ENCODE measurements at regions of chr22 and their contacts with region 1.

Region 1: DNA sequence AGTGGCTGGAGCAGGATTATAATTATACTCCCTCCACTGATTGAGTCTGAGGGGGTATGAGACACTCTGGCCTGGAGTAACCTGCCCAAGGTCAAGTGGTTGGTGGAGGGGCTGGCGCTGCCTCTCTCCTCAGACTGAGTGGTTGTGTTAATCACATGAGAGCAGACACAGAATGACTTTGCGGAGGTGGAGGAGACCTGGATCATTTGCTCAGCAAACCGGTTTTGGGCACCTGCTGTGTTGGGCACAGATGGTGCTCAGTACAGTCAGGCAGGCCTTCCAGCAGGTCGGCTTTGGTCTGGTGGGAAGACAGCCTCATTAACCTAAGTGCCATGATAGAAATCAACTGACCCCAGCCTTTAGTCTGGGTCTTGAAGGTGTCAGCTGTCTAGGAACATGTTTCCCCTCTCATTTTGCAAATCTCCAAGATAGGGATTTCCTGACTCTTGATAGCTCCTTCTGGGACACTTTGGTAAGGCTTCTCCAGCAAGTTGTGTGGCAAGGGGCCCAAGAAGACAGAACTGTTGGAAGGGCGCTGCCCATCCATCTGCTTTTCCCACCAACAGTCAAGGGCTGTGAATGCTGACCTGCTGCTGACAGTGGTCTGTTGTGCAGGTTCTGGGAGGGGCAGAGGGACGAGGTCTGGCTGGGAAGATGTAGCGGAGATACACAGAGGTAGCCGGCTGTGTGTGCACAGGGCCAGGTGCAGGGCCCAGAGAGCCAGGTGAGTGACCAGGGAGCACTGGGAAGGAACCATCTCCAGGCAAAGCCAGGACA is 12.1 kb downstream of the BCR start:
- DNase-seq: no peak

Region 2: DNA sequence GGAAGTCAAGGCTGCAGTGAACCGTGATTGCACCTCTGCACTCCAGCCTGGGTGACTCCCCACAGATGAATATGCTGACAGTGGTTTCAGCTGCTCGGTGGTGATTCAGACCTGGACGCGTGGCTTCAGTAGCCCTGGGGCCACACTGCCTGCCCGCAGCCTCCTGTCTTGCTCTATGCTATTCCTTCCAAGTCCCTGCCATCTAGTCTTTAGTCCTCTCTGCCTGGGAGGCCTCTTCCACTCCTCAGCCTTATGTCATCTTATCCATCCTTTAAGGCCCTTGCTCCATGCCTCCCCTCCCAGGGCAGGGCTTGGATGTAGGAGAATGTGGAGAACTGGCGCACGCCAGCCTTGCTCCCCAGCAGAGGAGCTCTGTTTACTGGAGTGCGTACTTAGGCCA is 1585.6 kb before region 1 on chr22:
- intact Hi-C with region 1: no loop called
- DNase-seq: no peak

Region 3: DNA sequence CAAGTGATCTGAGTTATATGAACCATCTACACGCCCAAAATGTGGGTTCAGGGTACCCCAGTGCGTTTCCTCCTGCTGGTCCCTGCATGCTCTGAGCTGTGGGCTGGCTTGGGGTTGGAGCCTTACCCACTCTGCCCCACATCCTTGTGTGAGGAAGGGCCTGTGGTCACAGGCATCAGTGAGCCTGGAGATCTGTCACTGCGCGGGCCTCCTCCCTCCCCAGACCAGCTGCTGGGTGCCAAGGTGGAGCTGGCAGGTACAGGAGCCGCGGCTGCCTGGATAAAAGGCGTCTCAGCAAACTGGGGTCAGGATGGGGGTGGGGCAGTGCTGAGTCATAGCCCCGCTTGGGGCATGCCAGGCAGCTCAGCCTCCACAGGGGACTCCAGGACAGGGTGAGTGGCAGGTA is 104.2 kb before region 1 on chr22:
- intact Hi-C with region 1: no loop called
- DNase-seq: no peak

Region 4: DNA sequence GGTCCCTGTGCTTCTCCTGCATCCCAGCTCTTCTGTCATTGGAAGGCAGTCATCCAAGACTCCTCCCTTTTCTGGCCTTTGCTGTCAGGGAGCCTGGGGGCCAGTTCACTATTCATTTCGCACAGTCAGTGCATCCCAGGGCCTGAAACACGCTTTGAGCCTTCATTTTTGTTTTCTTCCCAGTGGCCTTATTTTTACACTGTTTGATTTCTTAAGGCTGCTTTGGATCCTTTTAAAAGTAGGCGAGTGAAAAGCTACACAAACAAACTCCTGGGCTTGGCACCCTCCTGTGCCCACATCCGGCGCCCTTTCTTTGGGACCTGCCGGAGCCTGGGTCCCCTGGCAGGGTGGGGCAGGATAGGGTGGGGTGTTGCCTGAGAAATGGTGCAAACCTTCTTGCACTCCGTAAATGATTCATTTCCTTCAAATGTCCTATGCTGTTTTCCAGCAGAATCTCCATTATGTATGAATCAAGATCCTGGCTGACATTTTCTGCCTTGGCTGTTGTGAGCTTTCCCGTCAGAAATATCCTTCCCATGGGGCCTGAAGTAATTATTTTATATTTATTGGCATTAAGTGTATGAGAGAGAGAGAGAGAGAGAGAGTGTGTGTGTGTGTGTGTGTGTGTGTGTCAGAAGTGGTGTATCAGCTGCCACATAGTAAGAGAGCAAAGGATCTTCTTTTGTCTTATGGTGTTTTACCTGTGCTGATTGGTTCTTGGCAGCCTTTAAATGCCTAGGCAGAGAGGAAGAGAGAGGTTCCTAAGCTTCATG is 33.5 kb after region 1 on chr22:
- intact Hi-C with region 1: loop called in 1 of 2 experiments (anchors 5 kb)
- DNase-seq: peak; percentile 93

Region 5: GRCh38 chr22:23722724-23723123 is 530.4 kb after region 1 on chr22:
- intact Hi-C with region 1: loop called in 1 of 2 experiments (anchors 5 kb)
- DNase-seq: peak; percentile 15